Sciatic nerve (tissue), 2 donors: ENCODE measurements at regions of chr20 and their contacts with region 1.

Region 1: DNA sequence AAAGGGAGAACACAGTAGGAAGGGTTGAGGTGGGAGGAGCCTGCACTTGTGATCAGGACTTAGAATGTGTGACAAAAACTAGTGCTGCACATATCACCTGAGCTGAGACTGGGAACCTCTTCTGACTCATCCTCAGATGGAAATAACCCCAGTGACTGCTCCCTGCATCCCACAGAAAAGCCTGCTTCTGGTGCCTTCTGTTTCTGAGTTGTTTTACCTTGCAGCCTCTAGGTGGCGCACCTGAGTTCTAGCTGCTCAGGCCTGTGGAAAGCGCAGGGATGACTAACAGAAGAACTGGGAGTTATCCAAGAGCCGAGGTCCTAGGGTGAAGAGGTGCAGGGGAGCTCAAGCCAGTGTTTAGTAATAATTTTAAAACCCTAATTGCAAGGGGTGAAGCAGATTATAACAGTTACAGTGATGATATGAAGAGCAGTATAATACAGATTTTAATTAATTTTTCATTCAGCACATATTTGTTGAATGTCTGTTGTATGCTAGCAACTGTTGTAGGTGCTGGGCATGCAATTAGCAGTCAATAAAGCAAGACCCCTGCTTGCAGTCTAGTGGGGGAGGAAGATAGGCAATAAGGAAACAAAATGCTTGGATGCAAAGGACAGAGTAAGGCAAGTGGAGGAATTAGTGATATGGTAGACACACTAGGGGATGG is 302.5 kb downstream of the DHX35 start:
- DNase-seq: peak; percentile 75
- ATAC-seq: peak; percentile 75

Region 2: GRCh38 chr20:39874049-39874888 is 609.6 kb after region 1 on chr20:
- intact Hi-C with region 1: loop called (anchors 10 kb)
- DNase-seq: peak; percentile 81
- ATAC-seq: peak; percentile 96

Region 3: GRCh38 chr20:40689943-40690835 is 1425.5 kb after region 1 on chr20:
- intact Hi-C with region 1: loop called (anchors 10 kb)
- DNase-seq: peak; percentile 96
- ATAC-seq: peak; percentile 86